GM10248 (cell line): ENCODE measurements at regions of chr3 and their contacts with region 1.

Region 1: GRCh38 chr3:178768072-178768864 is 232.0 kb downstream of the KCNMB2 start:
- DNase-seq: no peak
- CTCF ChIP-seq: no peak

Region 2: GRCh38 chr3:177220136-177220974 is 1547.9 kb before region 1 on chr3:
- CTCF ChIA-PET with region 1: no interaction called
- POLR2A ChIA-PET with region 1: interaction called, 12 read pairs
- DNase-seq: no peak
- CTCF ChIP-seq: no peak

Region 3: DNA sequence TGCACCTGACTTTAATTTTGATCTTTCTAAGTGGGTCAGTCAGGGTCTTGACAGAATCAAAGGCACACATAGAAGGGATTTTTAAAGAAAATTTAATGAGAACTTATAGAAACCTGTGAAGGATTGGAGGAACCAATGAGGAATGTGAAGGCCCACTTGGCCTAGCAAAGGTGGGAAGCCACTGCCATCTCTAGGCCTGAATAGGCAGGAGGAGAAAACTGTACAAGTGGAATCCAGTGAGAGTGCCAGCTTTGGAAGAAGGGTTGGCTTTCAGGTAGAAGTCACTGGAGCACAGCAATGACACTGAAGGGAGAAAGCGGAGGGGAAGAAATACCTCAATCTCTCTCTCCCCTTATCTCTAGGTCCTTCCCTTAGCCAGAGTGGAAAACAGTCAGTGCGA is 612.7 kb before region 1 on chr3:
- CTCF ChIA-PET with region 1: no interaction called
- POLR2A ChIA-PET with region 1: no interaction called
- DNase-seq: no peak
- CTCF ChIP-seq: no peak